ENCODE measurements at regions of chr19 and their contacts with region 1.

Region 1: GRCh38 chr19:18117692-18118378 is 20.3 kb downstream of the MAST3 start:
- H3K4me3 Mint-ChIP-seq: peak overlapping the region; percentile 83
- H3K27ac Mint-ChIP-seq: peak overlapping the region; percentile 76
- H3K4me1 Mint-ChIP-seq: peaks cover 65% of the 10 kb centered on the region
- H3K27me3 Mint-ChIP-seq: no peaks in the 10 kb centered on the region

Region 2: DNA sequence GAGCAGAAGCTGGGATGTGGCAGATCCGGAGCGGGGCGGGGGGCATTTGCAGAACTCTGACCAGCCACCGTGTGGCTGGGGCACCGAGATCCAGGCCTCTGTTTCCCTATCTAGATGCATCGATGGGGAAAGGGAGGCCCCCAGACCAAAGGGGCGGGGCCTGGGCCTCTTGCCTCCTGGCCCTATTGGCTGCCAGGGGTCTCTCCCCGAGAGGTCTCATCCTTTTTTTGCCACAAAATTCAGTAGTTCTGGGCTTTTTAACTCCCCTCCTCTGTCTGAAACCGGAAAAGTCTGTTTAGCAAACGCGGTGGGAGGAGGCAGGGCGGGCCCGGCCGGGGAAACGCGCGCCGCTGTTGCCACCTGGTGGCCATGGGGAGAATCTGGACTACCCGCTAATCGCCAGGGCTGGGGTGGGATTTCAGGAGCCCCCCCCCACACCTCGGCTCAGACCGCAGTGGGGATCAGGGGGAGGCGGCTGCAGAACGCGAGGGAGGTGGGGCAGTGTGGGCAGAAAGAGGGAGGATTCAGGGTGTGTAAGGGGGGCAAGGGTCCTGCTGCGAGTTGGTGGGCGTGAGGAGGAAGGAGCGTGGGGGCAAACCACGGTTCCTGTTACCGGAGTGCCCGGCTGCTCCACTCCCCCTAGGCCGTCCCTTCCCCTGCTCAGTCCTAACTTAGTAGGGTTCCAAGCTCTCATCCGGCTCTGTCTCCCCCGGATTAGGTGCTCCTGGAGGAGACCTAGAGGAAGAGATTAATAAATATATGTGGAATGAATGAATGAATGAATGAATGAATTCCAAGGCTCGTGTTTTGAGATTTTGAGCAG is 59.4 kb before region 1 on chr19:
- intact Hi-C with region 1: no loop called
- H3K4me3 Mint-ChIP-seq: peak overlapping the region; percentile 61
- H3K27ac Mint-ChIP-seq: peak overlapping the region; percentile 81
- H3K4me1 Mint-ChIP-seq: peaks cover 16% of the 10 kb centered on the region
- H3K27me3 Mint-ChIP-seq: no peaks in the 10 kb centered on the region

Region 3: GRCh38 chr19:18141031-18141430 is 23.2 kb after region 1 on chr19:
- intact Hi-C with region 1: no loop called
- H3K4me3 Mint-ChIP-seq: no peak overlapping the region
- H3K27ac Mint-ChIP-seq: no peak overlapping the region
- H3K4me1 Mint-ChIP-seq: peaks cover 14% of the 10 kb centered on the region
- H3K27me3 Mint-ChIP-seq: no peaks in the 10 kb centered on the region

Region 4: GRCh38 chr19:18152444-18152816 is 34.6 kb after region 1 on chr19:
- intact Hi-C with region 1: loop called (anchors 5 kb)
- H3K4me3 Mint-ChIP-seq: peak overlapping the region; percentile 74
- H3K27ac Mint-ChIP-seq: peak overlapping the region; percentile 90
- H3K4me1 Mint-ChIP-seq: peaks cover 53% of the 10 kb centered on the region
- H3K27me3 Mint-ChIP-seq: no peaks in the 10 kb centered on the region

Region 5: GRCh38 chr19:18167975-18168645 is 50.3 kb after region 1 on chr19:
- intact Hi-C with region 1: loop called (anchors 5 kb)
- H3K4me3 Mint-ChIP-seq: peak overlapping the region; percentile 34
- H3K27ac Mint-ChIP-seq: peak overlapping the region; percentile 99
- H3K4me1 Mint-ChIP-seq: peaks cover 55% of the 10 kb centered on the region
- H3K27me3 Mint-ChIP-seq: no peaks in the 10 kb centered on the region

Measured in dendritic cell treated with granulocyte-macrophage colony-stimulating factor and Interleukin-4, amounts not matched to agents 40 ng/mL and 50 ng/mL, for 4 days (primary cell).